HCT116 (cell line): ENCODE measurements at regions of chr11 and their contacts with region 1.

Region 1: GRCh38 chr11:61899146-61899841 is 7.9 kb upstream of the FADS3 start:
- DNase-seq: peak; percentile 36
- ATAC-seq: peak; percentile 90
- H3K4me3 ChIP-seq: no peak overlapping the region
- H3K27ac ChIP-seq: no peak overlapping the region
- H3K4me1 ChIP-seq: 0 out of 4 replicates have a peak, but pooled peaks cover 0 to 3% of the 10 kb centered on the region in 2 experiments
- H3K27me3 ChIP-seq: no peaks in the 10 kb centered on the region
- CTCF ChIP-seq: peak; percentile 97 to 100 (median 100)
- POLR2A ChIP-seq: no peak
- RAD21 ChIP-seq: peak; percentile 95

Region 2: GRCh38 chr11:61545341-61545740 is 354.0 kb before region 1 on chr11:
- CTCF ChIA-PET with region 1: no interaction called
- POLR2A ChIA-PET with region 1: no interaction called
- RAD21 ChIA-PET with region 1: no interaction called
- intact Hi-C with region 1: no loop called
- DNase-seq: peak; percentile 22
- ATAC-seq: peak; percentile 67
- H3K4me3 ChIP-seq: no peak overlapping the region
- H3K27ac ChIP-seq: no peak overlapping the region
- H3K4me1 ChIP-seq: peaks cover 6 to 23% of the 10 kb centered on the region in 2 experiments
- H3K27me3 ChIP-seq: no peaks in the 10 kb centered on the region
- CTCF ChIP-seq: peak; percentile 76 to 79 (median 77)
- POLR2A ChIP-seq: no peak
- RAD21 ChIP-seq: no peak

Region 3: DNA sequence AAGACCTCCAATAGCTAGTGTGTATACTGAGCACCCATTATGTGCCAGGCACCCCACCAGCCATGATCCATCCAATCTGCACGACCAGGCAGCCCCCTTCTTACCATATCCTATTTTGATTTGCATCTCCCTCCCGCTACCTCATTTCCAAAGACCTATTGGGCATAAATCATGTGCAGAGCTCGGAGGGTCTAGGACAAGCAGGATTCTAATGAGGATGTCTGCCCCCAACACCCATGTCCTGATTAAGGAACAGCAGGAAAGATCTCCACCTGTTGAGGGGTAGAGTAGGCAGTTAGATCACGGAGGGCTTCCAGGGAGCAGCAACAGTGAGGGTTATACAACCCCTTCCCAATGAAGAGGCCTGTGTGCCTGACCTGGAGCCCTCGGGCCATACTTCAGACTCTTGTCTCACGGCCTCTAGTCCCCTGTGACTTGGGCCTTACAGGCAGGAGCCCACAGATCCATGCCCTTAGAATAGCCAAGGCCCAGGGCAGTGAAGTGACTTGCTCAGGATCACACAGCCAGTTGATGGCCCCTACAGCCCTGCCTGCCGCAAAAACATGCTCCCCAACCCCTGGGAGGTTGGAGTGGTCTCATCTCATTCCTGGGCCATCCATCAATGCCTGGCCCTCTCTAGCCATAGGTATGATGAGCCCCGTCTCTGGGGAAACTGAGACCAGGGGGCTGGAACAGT is 14.6 kb after region 1 on chr11:
- CTCF ChIA-PET with region 1: interaction called, 21 read pairs
- POLR2A ChIA-PET with region 1: no interaction called
- RAD21 ChIA-PET with region 1: no interaction called
- intact Hi-C with region 1: no loop called
- DNase-seq: no peak
- ATAC-seq: no peak
- H3K4me3 ChIP-seq: no peak overlapping the region
- H3K27ac ChIP-seq: no peak overlapping the region
- H3K4me1 ChIP-seq: peaks cover 5 to 16% of the 10 kb centered on the region in 2 experiments; a peak in 3 of 4 replicates
- H3K27me3 ChIP-seq: no peaks in the 10 kb centered on the region
- CTCF ChIP-seq: no peak
- POLR2A ChIP-seq: no peak
- RAD21 ChIP-seq: no peak

Region 4: GRCh38 chr11:61927501-61927900 is 28.2 kb after region 1 on chr11:
- CTCF ChIA-PET with region 1: interaction called, 15 read pairs
- POLR2A ChIA-PET with region 1: no interaction called
- RAD21 ChIA-PET with region 1: no interaction called
- intact Hi-C with region 1: no loop called
- DNase-seq: no peak
- ATAC-seq: no peak
- H3K4me3 ChIP-seq: no peak overlapping the region
- H3K27ac ChIP-seq: no peak overlapping the region
- H3K4me1 ChIP-seq: no peaks in the 10 kb centered on the region
- H3K27me3 ChIP-seq: no peaks in the 10 kb centered on the region
- CTCF ChIP-seq: no peak
- POLR2A ChIP-seq: no peak
- RAD21 ChIP-seq: no peak

Region 5: GRCh38 chr11:61967116-61967923 is 68.0 kb after region 1 on chr11 and contains the start of gene FTH1:
- CTCF ChIA-PET with region 1: interaction called, 8 read pairs
- POLR2A ChIA-PET with region 1: interaction called, 10 read pairs
- RAD21 ChIA-PET with region 1: no interaction called
- intact Hi-C with region 1: loop called (anchors 5 kb)
- DNase-seq: peak; percentile 71
- ATAC-seq: peak; percentile 73
- H3K4me3 ChIP-seq: peak within 1 kb of the TSS; percentile 73 to 99
- H3K27ac ChIP-seq: peak within 1 kb of the TSS; percentile 96
- H3K4me1 ChIP-seq: peaks cover 40 to 78% of the 10 kb centered on the region in 2 experiments
- H3K27me3 ChIP-seq: no peaks in the 10 kb centered on the region
- CTCF ChIP-seq: no peak
- POLR2A ChIP-seq: peak; percentile 84
- RAD21 ChIP-seq: no peak
- total RNA-seq, gene FTH1: 3,345 TPM

Region 6: GRCh38 chr11:62054484-62055121 is 155.3 kb after region 1 on chr11:
- CTCF ChIA-PET with region 1: interaction called, 26 read pairs
- POLR2A ChIA-PET with region 1: no interaction called
- RAD21 ChIA-PET with region 1: interaction called, 3 to 8 read pairs
- intact Hi-C with region 1: loop called (anchors 1 kb)
- DNase-seq: peak; percentile 87
- ATAC-seq: peak; percentile 98
- H3K4me3 ChIP-seq: no peak overlapping the region
- H3K27ac ChIP-seq: no peak overlapping the region
- H3K4me1 ChIP-seq: peaks cover 13 to 19% of the 10 kb centered on the region in 2 experiments; a peak in 3 of 4 replicates
- H3K27me3 ChIP-seq: no peaks in the 10 kb centered on the region
- CTCF ChIP-seq: peak; percentile 79 to 95 (median 80)
- POLR2A ChIP-seq: no peak
- RAD21 ChIP-seq: peak; percentile 99

Region 7: DNA sequence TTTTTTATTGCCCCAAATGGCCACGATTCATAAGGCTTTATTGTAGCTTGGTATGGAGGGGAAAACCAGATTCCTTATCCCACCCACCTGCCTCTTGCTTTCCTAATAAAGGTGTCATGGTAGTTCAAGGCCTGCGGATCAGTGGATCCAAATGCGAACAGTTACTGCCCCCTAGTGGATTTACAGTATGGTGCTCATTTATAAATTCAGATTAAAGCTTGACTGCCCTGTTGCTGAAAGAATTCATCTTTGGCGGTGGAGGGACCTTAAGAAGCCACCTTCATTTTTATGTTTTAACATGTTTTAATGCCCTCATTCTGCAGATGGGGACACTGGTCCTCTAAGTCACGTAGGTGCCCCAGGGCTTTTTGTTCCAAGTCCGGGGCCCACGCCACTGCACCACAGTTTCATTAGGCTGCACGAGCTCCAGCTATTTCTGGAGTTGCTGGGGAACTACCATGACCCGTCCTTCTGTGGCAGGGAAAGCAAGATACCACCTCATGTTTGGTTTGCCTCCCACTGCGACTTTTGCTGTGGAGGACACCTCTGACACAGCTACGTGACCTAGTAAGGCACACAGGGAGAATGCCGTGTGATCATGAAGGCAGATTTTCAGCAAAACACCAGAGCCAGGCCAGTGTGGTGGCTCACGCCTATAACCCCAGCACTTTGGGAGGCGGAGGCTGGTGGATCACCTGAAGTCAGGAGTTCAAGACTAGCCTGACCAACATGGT is 208.9 kb after region 1 on chr11:
- CTCF ChIA-PET with region 1: interaction called, 82 read pairs
- POLR2A ChIA-PET with region 1: no interaction called
- RAD21 ChIA-PET with region 1: interaction called, 11 read pairs
- intact Hi-C with region 1: loop called (anchors 1 kb)
- DNase-seq: peak; percentile 59
- ATAC-seq: peak; percentile 84
- H3K4me3 ChIP-seq: no peak overlapping the region
- H3K27ac ChIP-seq: no peak overlapping the region
- H3K4me1 ChIP-seq: no peaks in the 10 kb centered on the region; a peak in 1 of 4 replicates
- H3K27me3 ChIP-seq: no peaks in the 10 kb centered on the region
- CTCF ChIP-seq: peak; percentile 68 to 92 (median 88)
- POLR2A ChIP-seq: no peak
- RAD21 ChIP-seq: peak; percentile 95